Right ventricle myocardium superior (tissue), 1 donor: ENCODE measurements at regions of chr13 and their contacts with region 1.

Region 1: DNA sequence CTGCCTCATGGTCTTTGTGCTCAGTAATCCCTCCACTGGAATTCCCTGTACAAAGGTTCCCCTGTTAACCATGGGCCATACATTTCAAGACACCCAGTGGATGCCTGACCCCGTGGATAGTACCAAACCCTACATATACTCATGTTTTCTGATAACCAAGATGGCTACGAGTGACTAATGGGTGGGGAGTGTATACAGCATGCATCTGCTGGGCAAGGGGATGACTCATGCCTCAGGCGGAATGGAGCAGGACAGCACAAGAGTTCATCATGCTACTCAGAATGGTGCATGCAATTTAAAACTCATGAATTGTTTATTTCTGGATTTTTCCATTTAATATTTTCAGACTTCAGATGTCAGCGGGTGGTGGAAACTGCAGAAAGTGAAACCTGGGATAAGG is 13.3 kb upstream of the FGF9 start:
- DNase-seq: no peak
- ATAC-seq: no peak

Region 2: DNA sequence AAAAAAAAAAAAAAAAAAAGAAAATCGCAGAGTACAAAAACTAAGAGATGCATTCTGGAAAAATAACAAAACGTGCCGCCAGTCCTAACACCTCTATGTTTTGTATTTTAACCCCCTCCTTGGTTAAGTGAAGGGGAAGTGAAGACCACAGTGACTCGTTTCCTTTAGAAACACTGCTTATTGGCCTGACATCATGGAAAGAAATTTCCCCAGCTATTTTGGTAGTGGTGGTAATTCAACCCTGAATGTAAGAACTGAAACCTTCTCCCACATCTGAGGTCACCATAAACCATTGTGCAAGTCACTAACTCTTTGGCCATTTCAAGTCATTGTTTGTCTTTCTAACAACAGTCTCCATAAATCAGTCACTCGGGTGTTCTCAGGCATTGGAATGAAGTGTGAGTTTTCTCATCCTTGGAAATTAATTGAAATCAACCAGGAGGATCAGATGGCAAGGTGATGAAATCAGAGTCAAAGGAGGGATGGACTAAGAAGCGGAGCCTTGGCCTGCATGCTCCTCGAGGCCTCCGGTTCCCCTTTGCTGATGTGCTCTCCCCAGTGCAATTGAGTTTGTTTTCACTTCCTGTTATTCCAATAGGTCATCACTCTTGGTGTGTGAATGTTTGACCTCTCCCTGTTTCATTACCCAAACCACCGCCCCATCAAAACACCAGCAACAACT is 457.2 kb after region 1 on chr13:
- intact Hi-C with region 1: loop called (anchors 10 kb)
- DNase-seq: peak; percentile 47
- ATAC-seq: no peak

Region 3: GRCh38 chr13:22214184-22214583 is 556.6 kb after region 1 on chr13:
- intact Hi-C with region 1: no loop called
- DNase-seq: no peak
- ATAC-seq: no peak